Activated T-helper 2 cell treated with anti-CD3 and anti-CD28 coated beads, Interferon-gamma antibody, Interleukin-2, Interleukin-4, amounts not matched to agents 10 μg/mL and 5 μg/mL and 100 μg/mL, durations not matched to agents 14 hours and 24 hours and 36 hours (primary cell): ENCODE measurements at regions of chr6 and their contacts with region 1.

Region 1: GRCh38 chr6:154301839-154302752 is 54.5 kb downstream of the IPCEF1 start:
- DNase-seq: no peak
- H3K4me3 Mint-ChIP-seq: no peak overlapping the region
- H3K27ac Mint-ChIP-seq: no peak overlapping the region
- H3K4me1 Mint-ChIP-seq: peaks cover 18% of the 10 kb centered on the region
- H3K27me3 Mint-ChIP-seq: peaks cover 31% of the 10 kb centered on the region

Region 2: GRCh38 chr6:154140743-154141142 is 161.4 kb before region 1 on chr6:
- intact Hi-C with region 1: no loop called
- DNase-seq: no peak
- H3K4me3 Mint-ChIP-seq: no peak overlapping the region
- H3K27ac Mint-ChIP-seq: no peak overlapping the region
- H3K4me1 Mint-ChIP-seq: no peaks in the 10 kb centered on the region
- H3K27me3 Mint-ChIP-seq: peaks cover 7% of the 10 kb centered on the region

Region 3: DNA sequence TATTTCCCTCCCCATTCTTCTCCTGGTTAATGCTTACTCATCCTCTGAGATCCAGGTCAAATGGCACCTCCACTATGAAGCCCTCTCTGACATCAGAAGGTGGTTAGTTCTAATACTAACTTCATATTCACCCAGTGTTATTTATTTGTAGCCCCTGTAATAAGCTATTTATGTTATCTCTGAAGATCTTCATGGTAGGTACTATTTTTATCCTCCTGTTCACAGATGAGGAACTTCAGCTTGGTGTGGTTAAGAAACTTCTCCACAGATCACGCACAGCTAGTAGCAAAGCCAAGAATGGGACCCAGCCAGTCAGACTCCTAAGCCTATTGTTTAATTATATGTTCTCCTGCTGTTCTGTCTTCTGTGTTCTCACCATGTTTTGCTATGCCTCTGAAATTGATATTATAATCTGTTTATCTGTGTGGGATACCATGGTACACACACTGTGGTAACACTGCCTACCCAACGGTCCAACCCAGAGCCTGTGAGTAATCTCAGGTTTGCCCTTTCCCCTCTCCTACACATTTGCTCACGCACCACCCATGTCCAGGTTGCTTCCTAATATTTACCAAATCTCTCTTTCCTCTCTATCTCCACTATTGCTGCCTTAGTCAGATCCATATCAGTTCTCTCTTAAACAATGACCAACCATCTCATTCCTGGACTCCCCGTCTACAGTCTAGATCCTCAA is 43.9 kb before region 1 on chr6:
- intact Hi-C with region 1: loop called (anchors 5 kb)
- DNase-seq: no peak
- H3K4me3 Mint-ChIP-seq: no peak overlapping the region
- H3K27ac Mint-ChIP-seq: no peak overlapping the region
- H3K4me1 Mint-ChIP-seq: peaks cover 18% of the 10 kb centered on the region
- H3K27me3 Mint-ChIP-seq: peaks cover 24% of the 10 kb centered on the region